Lower leg skin (tissue), 4 donors: ENCODE measurements at regions of chr9 and their contacts with region 1.

Region 1: GRCh38 chr9:81689343-81690190 is at the start of gene TLE1:
- DNase-seq: peak; percentile 99 to 100
- H3K4me3 ChIP-seq: peak within 1 kb of the TSS; percentile 62
- CTCF ChIP-seq: no peak
- POLR2A ChIP-seq: no peak
- total RNA-seq, gene TLE1: 42.0 to 63.3 (median 43.7) TPM

Region 2: GRCh38 chr9:81529556-81530195 is 159.9 kb before region 1 on chr9:
- intact Hi-C with region 1: loop called (anchors 10 kb)
- DNase-seq: peak in 1 of 2 donors; percentile 75
- H3K4me3 ChIP-seq: no peak overlapping the region
- CTCF ChIP-seq: no peak
- POLR2A ChIP-seq: no peak